ENCODE measurements at regions of chr1 and their contacts with region 1.

Region 1: GRCh38 chr1:17059739-17060460 is 6.1 kb upstream of the SDHB start:
- DNase-seq: peak; percentile 50 to 83 (median 55)
- ATAC-seq: peak; percentile 78 to 90 (median 88)
- H3K4me3 ChIP-seq: no peak overlapping the region
- H3K27ac ChIP-seq: peak overlapping the region in 1 of 12 donors; percentile 38
- H3K4me1 ChIP-seq: peaks cover 0 to 20% (median 2%) of the 10 kb centered on the region in 12 donors
- H3K27me3 ChIP-seq: no peaks in the 10 kb centered on the region
- CTCF ChIP-seq: peak; percentile 45 to 72 (median 64)
- POLR2A ChIP-seq: no peak

Region 2: DNA sequence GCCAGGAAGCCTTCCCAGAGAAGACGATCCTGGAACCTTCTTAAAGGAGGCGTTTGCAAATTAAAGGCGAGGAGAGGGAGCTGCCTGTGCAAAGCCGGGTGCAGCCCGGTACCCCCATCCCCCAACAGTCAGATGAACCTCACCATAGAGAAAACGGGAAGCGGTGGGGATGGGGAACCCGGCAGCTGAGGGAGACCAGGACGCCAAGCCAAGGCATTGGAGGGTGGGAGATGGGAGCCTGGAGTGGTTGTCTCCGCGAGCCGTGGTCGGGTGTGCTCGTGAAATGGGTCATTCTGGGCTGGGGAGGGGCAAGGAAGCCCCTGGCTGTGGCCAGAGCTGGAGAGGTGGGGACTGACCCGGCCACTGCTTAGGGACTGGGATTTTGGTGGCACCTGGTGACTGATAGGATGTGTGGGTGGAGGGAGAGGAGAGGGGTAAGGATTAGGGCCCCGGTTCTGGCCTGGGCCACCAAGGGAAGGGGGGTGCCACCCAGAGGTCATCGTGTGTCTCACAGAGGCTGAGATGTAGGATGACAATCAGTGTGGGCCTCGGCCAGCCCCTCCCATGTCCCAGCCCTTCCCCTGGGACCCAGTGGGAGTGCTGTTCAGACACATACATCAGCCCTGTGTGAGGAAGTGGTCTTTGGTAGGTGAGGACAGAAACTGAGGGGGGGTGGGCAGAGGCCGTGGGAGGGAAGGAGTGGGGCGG is 60.0 kb after region 1 on chr1:
- intact Hi-C with region 1: loop called in 3 of 10 experiments (anchors 5 to 10 kb)
- DNase-seq: no peak
- ATAC-seq: peak in 1 of 4 donors; percentile 25
- H3K4me3 ChIP-seq: peak overlapping the region in 9 of 12 donors; percentile 27 to 54 (median 46)
- H3K27ac ChIP-seq: peak overlapping the region in 1 of 12 donors; percentile 64
- H3K4me1 ChIP-seq: peaks cover 0 to 31% (median 10%) of the 10 kb centered on the region in 12 donors
- H3K27me3 ChIP-seq: peaks cover 3 to 50% (median 38%) of the 10 kb centered on the region in 9 donors
- CTCF ChIP-seq: no peak
- POLR2A ChIP-seq: no peak

Region 3: DNA sequence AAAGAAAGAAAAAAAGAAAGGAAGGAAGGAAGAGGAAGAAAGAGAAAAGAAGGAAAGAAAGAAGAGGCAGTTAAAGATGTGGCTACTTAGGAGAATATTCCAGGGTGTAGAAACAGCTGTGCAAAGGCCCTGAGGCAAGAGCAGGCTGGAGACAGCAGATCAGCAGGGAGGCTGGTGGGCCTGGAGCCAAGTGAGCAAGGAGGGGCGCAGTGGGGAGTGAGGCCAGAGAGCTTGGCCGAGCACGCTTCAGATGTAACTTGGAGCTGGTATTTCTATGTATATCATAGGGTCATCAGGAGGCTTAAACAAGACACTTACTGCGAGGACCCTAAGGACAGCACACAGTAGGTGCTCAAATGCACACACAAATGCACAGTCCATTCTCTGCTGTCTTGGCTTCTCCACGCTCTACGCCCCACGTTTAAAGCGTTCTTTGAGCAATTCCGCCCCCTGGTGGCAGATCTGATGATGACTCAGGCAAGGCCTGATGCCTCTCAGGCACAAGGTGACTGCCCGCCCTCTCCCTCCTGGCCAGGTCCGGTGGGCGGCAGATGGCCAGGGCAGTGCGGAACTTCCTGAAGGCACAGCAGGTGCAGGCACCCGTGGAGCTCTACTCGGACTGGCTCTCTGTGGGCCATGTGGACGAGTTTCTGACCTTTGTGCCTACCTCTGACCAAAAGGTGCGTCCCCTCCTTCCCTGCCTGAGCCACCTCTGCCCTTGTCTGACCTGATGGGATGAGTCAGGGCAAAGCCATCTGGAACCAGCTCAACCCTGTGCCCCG is 177.1 kb after region 1 on chr1:
- intact Hi-C with region 1: loop called (anchors 1 to 5 kb)
- DNase-seq: peak; percentile 79 to 89 (median 81)
- ATAC-seq: peak; percentile 64 to 86 (median 84)
- H3K4me3 ChIP-seq: no peak overlapping the region
- H3K27ac ChIP-seq: no peak overlapping the region
- H3K4me1 ChIP-seq: peaks cover 0 to 9% (median 0%) of the 10 kb centered on the region in 12 donors
- H3K27me3 ChIP-seq: peaks cover 0 to 44% (median 6%) of the 10 kb centered on the region in 9 donors
- CTCF ChIP-seq: peak; percentile 75 to 91 (median 84)
- POLR2A ChIP-seq: no peak

Region 4: DNA sequence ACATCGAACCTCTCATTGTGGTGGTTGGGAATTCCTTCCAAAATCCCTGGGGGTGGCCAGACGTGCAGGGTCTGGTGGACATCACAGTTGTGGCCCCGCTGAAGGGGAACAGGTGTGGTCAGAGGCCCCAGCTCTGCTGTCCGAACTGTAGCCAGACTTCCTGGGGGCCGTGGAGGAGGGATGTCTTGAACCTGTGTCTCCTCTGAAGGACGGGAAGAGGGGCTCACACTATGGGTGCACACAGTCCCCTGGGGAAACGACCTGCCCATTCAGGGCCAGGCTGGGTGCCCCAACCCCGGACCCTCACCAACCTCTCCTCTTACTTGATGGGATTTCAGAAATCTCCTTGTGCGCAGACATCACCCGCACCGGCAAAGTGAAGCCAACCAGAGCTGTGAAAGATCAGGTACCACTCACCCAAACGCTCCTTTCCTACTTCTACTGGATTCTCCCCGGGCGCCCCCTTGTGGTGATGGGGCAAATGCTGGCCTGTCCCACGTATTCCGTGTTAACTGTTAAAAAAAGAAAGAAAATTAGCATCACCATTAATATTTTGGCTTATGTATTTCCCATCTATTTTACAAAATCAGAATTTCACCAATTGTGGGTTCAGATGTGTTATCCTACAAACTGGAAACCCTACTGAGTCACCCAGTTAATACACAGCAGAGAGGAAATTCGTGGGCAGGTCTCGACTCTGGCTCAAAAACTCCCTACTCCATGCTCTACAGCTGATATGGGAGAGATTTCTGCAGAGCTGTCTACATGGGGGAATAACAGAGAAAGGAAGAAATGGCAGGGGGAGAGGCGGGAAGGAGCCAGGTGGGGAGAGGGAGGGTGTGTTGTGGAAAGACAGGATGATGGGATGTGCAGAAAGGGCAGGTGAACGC is 276.2 kb after region 1 on chr1:
- intact Hi-C with region 1: loop called in 2 of 10 experiments (anchors 5 kb)
- DNase-seq: peak; percentile 37 to 80 (median 55)
- ATAC-seq: peak in 2 of 4 donors; percentile 52 to 55
- H3K4me3 ChIP-seq: no peak overlapping the region
- H3K27ac ChIP-seq: no peak overlapping the region
- H3K4me1 ChIP-seq: no peaks in the 10 kb centered on the region
- H3K27me3 ChIP-seq: peaks cover 0 to 43% (median 0%) of the 10 kb centered on the region in 9 donors
- CTCF ChIP-seq: peak; percentile 49 to 80 (median 67)
- POLR2A ChIP-seq: no peak

Region 5: DNA sequence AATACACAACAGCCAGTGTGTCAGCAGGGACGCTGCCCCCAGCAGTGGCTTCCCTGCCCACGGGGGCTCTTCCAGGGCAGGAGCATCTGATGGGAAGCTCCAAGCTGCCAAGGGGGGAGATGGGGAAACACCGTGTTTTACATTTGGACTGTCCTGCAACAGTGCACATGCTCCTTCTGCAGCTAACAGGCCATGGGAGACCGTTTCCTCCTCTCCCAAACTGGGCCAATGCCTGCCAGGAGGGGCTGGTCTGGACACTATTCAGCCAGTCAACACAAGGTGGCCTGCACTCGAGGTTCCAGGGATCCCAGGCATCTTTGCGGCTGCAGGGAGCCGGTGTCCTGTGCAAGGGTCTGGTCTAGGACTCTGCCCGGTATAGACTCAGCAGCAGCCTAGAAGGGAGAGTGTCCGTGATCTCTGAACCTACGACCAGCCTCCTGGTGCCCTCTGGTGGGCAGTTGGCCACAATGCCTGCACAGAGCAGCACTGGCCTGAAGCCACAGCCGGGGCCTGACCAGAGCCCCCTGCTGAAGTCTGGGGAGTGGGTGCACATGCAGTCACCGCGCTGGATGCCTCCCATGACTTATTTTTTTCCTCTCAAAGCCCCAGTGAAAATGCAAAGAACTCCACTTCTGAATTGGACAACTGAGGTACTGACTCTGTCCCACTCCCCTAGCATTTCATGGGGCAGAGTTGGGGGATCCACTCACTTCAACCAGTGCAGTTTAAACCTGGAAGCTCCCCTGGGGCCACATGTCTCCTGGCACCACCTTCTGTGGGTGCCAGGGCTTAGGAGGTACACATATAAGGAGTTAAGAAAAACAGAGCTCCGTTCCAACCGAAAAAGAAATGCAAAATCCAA is 346.2 kb after region 1 on chr1:
- intact Hi-C with region 1: loop called in 1 of 10 experiments (anchors 5 kb)
- DNase-seq: peak; percentile 47 to 79 (median 59)
- ATAC-seq: peak; percentile 55 to 86 (median 82)
- H3K4me3 ChIP-seq: no peak overlapping the region
- H3K27ac ChIP-seq: no peak overlapping the region
- H3K4me1 ChIP-seq: peaks cover 0 to 6% (median 0%) of the 10 kb centered on the region in 12 donors
- H3K27me3 ChIP-seq: no peaks in the 10 kb centered on the region
- CTCF ChIP-seq: peak; percentile 49 to 74 (median 69)
- POLR2A ChIP-seq: no peak

Measured in heart left ventricle (tissue), 16 donors.